ENCODE measurements at regions of chr5 and their contacts with region 1.

Region 1: DNA sequence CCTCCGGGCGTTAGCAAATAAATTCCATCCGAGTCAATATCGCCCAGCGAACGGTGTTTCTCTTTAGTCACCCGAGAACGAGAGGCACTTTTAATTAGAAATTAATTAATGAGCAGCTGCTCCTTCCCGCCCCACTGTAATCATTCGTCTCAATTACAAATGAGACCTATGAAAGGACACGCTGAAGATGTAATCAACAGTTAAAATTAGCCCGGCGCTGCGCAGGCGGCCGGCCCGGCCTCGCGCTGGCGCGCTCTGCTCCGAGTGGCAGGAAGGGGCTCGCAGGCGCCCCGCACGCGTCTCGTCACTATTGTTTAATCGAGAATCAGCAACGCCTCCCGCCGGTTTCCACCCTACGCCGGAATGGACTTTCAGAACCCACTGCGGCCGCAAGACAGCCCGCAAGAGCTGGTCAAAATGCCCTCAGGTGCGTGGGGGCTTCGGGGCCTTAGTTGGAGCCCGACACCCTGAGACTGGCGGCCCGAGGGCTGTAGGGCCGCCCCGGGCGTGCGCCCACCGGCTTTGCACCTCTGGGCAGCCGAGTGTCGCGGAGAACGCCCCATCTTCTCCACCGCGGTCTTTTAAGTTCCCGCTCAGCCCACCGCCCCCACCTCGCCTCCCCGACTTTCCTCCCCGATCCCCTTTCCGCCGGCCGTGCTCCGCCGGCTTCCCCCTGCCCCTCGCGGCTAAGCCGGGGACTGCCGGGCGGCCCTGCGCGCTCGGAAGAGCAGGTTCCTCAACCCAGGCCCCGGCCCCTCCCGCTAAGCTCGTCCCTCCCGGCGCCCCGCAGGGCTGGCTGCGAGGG is 597 bp upstream of the IRX4 start:
- DNase-seq: peak; percentile 57
- H3K4me3 ChIP-seq: peak overlapping the region; percentile 76 to 96 (median 79)
- H3K27ac ChIP-seq: peak overlapping the region; percentile 95
- H3K4me1 ChIP-seq: peaks cover 22% of the 10 kb centered on the region
- H3K27me3 ChIP-seq: no peaks in the 10 kb centered on the region
- CTCF ChIP-seq: peak; percentile 13 to 52

Region 2: GRCh38 chr5:1763548-1763911 is 119.8 kb before region 1 on chr5:
- CTCF ChIA-PET with region 1: no interaction called
- dilution Hi-C with region 1: no loop called
- in situ Hi-C with region 1: no loop called
- intact Hi-C with region 1: loop called (anchors 5 kb)
- DNase-seq: peak; percentile 32
- H3K4me3 ChIP-seq: no peak overlapping the region
- H3K27ac ChIP-seq: no peak overlapping the region
- H3K4me1 ChIP-seq: no peaks in the 10 kb centered on the region
- H3K27me3 ChIP-seq: no peaks in the 10 kb centered on the region
- CTCF ChIP-seq: peak; percentile 76 to 80

Region 3: DNA sequence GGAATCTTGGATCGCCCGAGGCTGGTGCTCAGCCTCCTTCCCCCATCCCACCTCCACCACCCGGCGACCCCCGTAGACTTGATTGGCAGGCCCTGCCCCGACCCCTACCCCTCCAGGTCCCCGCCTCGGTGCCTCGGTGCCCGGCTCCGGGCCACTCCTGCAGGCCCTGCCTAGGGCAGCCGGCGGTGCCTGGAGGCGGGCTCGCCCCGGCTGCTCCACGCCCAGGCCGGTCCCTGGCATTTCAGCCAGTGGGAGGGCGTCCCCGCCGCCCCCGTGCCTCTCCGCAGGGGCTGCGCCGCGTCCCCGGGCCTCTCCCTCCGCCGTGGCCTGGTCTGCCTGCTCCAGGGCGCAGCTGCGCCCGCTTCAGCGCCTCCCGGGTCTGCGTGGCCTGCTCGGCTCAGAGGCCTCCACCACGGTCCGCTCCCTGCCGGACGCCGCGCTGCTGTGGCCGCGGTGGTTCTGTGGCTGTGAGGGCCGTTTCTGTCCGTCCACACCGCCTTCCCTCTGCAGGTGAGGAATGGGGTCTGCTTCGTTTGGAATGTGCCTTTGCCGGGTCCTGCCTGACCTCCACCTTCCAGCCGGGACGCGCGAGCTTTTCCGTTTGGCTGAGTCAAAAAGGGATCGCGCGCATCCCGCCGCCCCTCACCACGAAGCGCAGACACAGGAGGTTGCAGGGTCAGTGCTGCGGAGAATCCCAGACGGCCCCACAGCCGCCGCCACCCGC is 47.7 kb after region 1 on chr5:
- CTCF ChIA-PET with region 1: no interaction called
- dilution Hi-C with region 1: no loop called
- in situ Hi-C with region 1: no loop called
- intact Hi-C with region 1: loop called (anchors 1 kb)
- DNase-seq: peak; percentile 64
- H3K4me3 ChIP-seq: peak overlapping the region; percentile 48 to 71 (median 66)
- H3K27ac ChIP-seq: peak overlapping the region; percentile 75
- H3K4me1 ChIP-seq: peaks cover 40% of the 10 kb centered on the region
- H3K27me3 ChIP-seq: no peaks in the 10 kb centered on the region
- CTCF ChIP-seq: no peak

Region 4: DNA sequence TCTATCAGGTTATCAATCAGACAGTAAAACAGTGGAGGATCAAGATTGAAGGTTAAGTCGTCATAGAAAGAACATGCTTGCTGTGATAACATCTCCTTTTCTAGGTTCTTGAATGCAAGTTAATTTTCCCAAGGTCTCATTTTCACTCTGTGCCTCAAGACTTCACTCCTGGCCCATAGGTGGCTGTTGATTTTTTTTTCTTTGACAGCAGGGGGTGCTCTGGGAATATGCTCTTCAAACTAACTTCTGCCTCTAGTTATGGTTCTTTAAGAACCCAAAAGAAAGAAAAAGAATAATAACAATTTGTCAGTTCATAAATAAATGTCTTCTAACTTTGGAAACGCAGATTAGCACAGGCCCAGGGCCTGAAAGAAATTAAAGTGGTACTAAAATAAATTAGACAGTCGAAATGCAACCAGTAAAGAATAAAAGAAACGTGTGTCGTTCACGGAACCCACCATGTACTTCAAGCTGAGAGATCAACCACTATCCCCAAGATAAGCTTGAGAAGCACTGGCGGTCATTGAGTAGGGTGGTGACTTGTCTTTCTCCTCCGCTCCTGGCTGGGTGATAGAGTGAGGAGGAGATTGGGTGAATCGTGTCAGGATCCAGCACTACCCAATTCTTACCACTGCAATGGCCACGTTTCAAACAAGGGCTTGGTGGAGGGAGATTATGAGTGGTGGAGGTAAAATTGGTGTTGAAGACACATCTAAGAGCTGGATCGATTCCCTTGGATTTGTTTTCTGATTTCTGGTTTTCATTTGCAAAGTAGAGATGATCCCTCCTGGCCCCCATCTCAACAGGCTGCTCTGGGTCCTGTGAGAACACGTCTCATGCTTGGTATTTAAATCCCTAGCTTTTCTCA is 92.8 kb after region 1 on chr5:
- CTCF ChIA-PET with region 1: no interaction called
- dilution Hi-C with region 1: no loop called
- in situ Hi-C with region 1: no loop called
- intact Hi-C with region 1: loop called (anchors 1 kb)
- DNase-seq: peak; percentile 52
- H3K4me3 ChIP-seq: no peak overlapping the region
- H3K27ac ChIP-seq: peak overlapping the region; percentile 99
- H3K4me1 ChIP-seq: peaks cover 38% of the 10 kb centered on the region
- H3K27me3 ChIP-seq: no peaks in the 10 kb centered on the region
- CTCF ChIP-seq: peak; percentile 51 to 58

Region 5: DNA sequence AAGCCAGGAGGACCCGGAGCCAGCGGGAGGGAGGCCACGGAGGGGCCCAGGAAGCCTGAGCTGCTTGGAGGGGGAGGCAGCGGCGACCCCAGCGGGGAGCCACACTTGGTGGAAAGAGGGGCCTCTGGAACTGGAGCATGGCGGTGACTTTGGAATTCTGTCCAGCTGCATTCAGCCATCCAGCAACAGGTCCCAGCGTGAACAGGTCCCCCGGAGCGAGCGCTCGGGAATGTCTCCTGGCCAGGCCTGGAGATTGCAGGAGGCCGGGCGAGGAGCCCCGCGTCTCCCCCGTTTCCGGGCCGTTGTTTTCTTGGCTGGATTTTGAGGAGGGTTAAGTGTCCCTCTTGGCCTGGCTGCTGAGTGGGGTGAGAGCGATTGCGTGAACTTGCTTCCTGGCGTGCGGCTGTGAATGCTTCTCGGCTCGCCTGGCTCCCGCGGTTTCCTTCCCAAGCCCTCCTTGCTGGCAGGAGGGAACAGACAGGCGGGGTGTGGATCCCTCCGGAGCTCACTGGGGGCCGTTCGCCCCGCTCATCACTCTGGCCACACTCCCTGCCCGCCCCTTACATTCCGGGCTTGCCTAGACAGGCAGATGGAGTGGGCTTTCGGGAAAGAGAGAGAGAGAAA is 124.7 kb after region 1 on chr5:
- CTCF ChIA-PET with region 1: no interaction called
- dilution Hi-C with region 1: no loop called
- in situ Hi-C with region 1: no loop called
- intact Hi-C with region 1: no loop called
- DNase-seq: peak; percentile 14
- H3K4me3 ChIP-seq: peak overlapping the region; percentile 14 to 21 (median 21)
- H3K27ac ChIP-seq: peak overlapping the region; percentile 31
- H3K4me1 ChIP-seq: peaks cover 16% of the 10 kb centered on the region
- H3K27me3 ChIP-seq: peaks cover 3% of the 10 kb centered on the region
- CTCF ChIP-seq: no peak

Region 6: DNA sequence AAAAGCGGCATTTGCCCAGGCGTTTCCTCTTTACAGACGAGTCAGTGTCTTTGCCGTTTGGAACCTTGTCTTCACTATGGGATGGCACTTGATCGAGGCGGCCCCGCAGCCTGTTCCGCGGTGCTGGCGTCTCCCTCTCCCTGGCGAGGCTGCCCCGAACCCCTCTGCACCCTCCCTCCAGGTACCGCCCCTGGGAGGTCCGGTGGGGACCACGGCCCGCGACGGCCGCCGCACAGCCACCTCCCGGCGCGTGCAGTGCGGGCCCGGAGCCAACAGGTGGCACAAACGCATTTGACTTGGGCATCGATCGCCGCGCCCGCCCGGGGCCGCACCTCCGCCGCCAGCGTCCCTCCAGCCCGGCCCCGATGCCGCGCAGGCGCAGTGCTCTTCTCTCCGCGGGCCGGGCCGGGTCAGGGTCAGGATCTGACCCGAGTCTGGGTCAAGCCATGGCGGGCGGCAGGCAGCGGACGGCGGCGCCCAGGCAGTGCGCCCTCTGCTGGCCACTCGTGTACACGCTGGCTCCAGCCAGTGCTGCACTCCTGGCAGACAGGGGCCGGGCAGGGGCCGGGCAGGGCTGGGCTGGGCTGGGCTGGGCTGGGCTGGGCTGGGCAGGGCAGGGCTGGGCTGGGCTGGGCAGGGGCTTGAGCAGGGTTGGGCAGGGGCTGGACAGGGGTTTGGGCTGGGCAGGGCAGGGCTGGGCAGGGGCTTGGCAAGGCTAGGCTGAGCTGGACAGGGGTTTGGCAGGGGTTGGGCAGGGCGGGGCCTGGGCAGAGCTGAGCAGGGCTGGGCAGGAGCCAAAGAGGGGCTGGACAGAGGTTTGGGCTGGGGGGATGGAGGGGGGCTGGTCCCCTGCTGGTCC is 155.2 kb after region 1 on chr5:
- CTCF ChIA-PET with region 1: no interaction called
- dilution Hi-C with region 1: no loop called
- in situ Hi-C with region 1: no loop called
- intact Hi-C with region 1: loop called (anchors 5 kb)
- DNase-seq: peak; percentile 42
- H3K4me3 ChIP-seq: peak overlapping the region; percentile 53 to 58 (median 57)
- H3K27ac ChIP-seq: no peak overlapping the region
- H3K4me1 ChIP-seq: peaks cover 12% of the 10 kb centered on the region
- H3K27me3 ChIP-seq: no peaks in the 10 kb centered on the region
- CTCF ChIP-seq: peak; percentile 59 to 72

Region 7: GRCh38 chr5:3595006-3595961 is 1712.0 kb after region 1 on chr5 and contains the start of gene IRX1:
- CTCF ChIA-PET with region 1: no interaction called
- dilution Hi-C with region 1: no loop called
- in situ Hi-C with region 1: no loop called
- intact Hi-C with region 1: loop called (anchors 5 kb)
- DNase-seq: peak; percentile 73
- H3K4me3 ChIP-seq: peak within 1 kb of the TSS; percentile 82 to 100 (median 97)
- H3K27ac ChIP-seq: peak within 1 kb of the TSS; percentile 96
- H3K4me1 ChIP-seq: peaks cover 14% of the 10 kb centered on the region
- H3K27me3 ChIP-seq: no peaks in the 10 kb centered on the region
- CTCF ChIP-seq: no peak
- total RNA-seq, gene IRX1: 29.8 to 200 TPM

Measured in mammary epithelial cell (primary cell).